ENCODE measurements at regions of chr1 and their contacts with region 1.

Region 1: GRCh38 chr1:91165033-91165654 is 143.3 kb upstream of the ZNF644 start:
- DNase-seq: peak; percentile 74
- H3K27ac ChIP-seq: no peak overlapping the region
- CTCF ChIP-seq: peak; percentile 89

Region 2: DNA sequence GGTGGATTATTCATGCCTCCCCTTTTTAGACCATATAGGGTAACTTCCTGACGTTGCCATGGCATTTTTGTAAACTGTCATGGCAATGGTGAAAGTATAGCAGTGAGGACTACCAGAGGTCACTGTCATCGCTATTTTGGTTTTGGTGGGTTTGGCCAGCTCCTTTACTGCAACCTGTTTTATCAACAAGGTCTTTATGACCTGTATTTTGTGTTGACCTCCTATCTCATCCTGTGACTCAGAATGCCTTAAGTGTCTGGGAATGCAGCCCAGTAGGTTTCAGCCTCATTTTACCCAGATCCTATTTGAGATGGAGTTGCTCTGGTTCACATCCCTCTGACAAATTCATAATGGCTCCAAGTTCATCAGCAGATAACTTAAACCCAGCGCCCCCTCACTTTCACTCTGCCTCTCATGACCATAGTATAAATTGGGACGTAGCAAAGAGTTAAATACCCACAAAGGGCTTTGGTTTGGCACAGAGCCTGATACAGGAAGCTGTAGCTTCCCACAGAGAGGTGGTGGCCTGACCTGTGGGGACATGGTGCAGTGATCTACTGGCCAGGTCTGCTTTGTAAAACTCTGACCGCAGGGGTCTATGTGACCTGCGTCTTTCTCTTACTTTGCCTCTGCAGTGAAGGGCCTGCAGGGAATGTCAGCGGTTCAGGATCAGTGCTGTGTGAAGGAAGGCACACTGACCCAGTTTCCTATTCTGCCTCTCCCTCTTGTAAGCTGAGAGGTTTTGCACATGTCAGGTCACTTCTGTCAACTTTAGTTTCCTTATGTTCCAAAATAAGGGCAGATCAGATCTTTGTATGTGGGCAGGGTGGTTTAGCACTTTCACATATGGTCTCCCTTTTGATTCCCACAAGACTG is 65.2 kb before region 1 on chr1:
- CTCF ChIA-PET with region 1: no interaction called
- POLR2A ChIA-PET with region 1: no interaction called
- DNase-seq: no peak
- H3K27ac ChIP-seq: no peak overlapping the region
- CTCF ChIP-seq: no peak

Region 3: GRCh38 chr1:91278754-91279153 is 113.6 kb after region 1 on chr1:
- CTCF ChIA-PET with region 1: interaction called, 43 read pairs
- POLR2A ChIA-PET with region 1: no interaction called
- DNase-seq: no peak
- H3K27ac ChIP-seq: no peak overlapping the region
- CTCF ChIP-seq: 0 out of 2 replicates have a peak, but pooled peaks have one; percentile 6